CD4-positive, alpha-beta T cell (primary cell): ENCODE measurements at regions of chr7 and their contacts with region 1.

Region 1: DNA sequence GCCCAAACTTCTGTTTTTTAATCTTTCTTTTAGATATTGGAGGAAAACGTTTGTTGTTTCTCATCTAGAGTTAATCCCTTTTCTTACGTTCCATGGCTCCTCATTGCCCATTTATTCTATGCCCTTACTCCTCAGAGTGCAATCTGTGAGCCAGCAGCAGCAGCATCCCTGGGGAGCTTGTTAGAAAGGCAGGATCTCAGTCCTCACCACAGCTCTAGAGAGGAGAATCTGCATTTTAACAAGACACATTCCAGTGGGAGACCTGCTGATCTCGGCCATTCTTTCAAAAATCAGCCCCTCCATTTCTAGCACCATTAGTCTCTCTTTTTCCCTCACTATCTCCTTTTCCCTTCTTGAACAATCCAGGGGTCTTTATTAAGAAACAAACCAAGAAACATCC is 84.4 kb upstream of the NOBOX start:
- DNase-seq: no peak
- ATAC-seq: no peak
- H3K4me3 ChIP-seq: no peak overlapping the region
- H3K4me3 Mint-ChIP-seq: no peak overlapping the region
- H3K27ac ChIP-seq: no peak overlapping the region
- H3K27ac Mint-ChIP-seq: no peak overlapping the region
- H3K4me1 ChIP-seq: no peaks in the 10 kb centered on the region
- H3K4me1 Mint-ChIP-seq: no peaks in the 10 kb centered on the region
- H3K27me3 ChIP-seq: no peaks in the 10 kb centered on the region
- H3K27me3 Mint-ChIP-seq: no peaks in the 10 kb centered on the region
- CTCF ChIP-seq: no peak

Region 2: GRCh38 chr7:144439717-144440205 is 48.1 kb before region 1 on chr7:
- CTCF ChIA-PET with region 1: no interaction called
- POLR2A ChIA-PET with region 1: no interaction called
- intact Hi-C with region 1: no loop called
- DNase-seq: no peak
- ATAC-seq: no peak
- H3K4me3 ChIP-seq: no peak overlapping the region
- H3K4me3 Mint-ChIP-seq: no peak overlapping the region
- H3K27ac ChIP-seq: no peak overlapping the region
- H3K27ac Mint-ChIP-seq: no peak overlapping the region
- H3K4me1 ChIP-seq: no peaks in the 10 kb centered on the region
- H3K4me1 Mint-ChIP-seq: no peaks in the 10 kb centered on the region
- H3K27me3 ChIP-seq: no peaks in the 10 kb centered on the region
- H3K27me3 Mint-ChIP-seq: no peaks in the 10 kb centered on the region
- CTCF ChIP-seq: no peak

Region 3: DNA sequence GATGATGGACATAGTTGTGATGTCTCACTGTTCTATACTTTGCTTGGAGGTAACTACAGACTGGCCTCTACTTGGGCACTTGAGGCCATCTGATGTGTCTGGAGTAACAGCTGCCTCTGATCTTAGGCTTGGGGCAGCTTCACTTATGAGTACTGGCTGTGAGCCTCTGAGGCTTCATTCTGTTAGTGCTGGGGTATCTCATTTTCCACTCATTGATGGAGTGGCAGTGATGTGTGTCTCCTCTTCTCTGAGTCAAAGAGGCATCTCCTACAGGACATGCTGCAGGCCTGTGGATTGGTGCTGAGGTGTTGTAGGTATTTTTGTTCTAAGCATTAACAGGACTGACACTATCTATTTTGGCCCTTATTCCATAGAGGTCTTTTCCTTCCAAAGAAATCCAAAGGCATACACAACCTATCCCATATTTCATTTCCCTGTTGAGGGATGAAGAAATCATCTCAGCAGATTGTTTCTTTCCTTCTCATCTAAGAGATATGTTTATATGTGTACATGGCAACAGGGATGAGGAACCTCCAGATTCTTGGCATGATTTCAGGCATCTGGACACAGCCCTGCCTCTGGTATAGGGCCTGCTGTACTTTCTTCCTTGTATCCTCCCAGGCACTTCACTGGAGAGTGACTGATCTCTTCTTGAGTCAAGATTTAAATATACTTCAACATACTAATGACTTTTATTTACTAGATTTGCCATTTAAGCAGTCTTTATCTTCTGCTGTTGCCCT is 18.7 kb before region 1 on chr7:
- CTCF ChIA-PET with region 1: no interaction called
- POLR2A ChIA-PET with region 1: no interaction called
- intact Hi-C with region 1: no loop called
- DNase-seq: no peak
- ATAC-seq: no peak
- H3K4me3 ChIP-seq: no peak overlapping the region
- H3K4me3 Mint-ChIP-seq: no peak overlapping the region
- H3K27ac ChIP-seq: no peak overlapping the region
- H3K27ac Mint-ChIP-seq: no peak overlapping the region
- H3K4me1 ChIP-seq: no peaks in the 10 kb centered on the region
- H3K4me1 Mint-ChIP-seq: no peaks in the 10 kb centered on the region
- H3K27me3 ChIP-seq: no peaks in the 10 kb centered on the region
- H3K27me3 Mint-ChIP-seq: no peaks in the 10 kb centered on the region
- CTCF ChIP-seq: no peak

Region 4: DNA sequence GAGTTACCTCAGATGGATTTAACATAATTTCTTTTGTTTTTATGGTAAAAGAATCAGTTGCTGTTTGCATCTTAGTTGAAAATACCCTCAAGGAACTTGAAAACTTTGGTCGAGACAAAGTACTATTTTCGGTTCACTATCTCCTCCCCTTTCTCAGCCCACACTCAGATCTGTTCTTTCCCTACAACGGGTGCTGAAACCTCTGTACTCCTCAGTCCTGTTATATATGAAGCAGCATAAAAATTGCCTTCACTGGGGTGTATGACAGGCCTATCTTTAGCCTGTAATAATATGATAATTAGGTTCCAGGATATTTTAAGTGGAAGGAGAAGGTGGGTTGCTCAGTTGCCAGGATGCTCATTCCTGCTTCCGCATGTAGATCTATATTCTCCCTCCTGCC is 20.8 kb after region 1 on chr7:
- CTCF ChIA-PET with region 1: no interaction called
- POLR2A ChIA-PET with region 1: no interaction called
- intact Hi-C with region 1: loop called in 1 of 2 experiments (anchors 1 kb)
- DNase-seq: no peak
- ATAC-seq: no peak
- H3K4me3 ChIP-seq: no peak overlapping the region
- H3K4me3 Mint-ChIP-seq: no peak overlapping the region
- H3K27ac ChIP-seq: no peak overlapping the region
- H3K27ac Mint-ChIP-seq: no peak overlapping the region
- H3K4me1 ChIP-seq: no peaks in the 10 kb centered on the region
- H3K4me1 Mint-ChIP-seq: no peaks in the 10 kb centered on the region
- H3K27me3 ChIP-seq: no peaks in the 10 kb centered on the region
- H3K27me3 Mint-ChIP-seq: no peaks in the 10 kb centered on the region
- CTCF ChIP-seq: no peak

Region 5: DNA sequence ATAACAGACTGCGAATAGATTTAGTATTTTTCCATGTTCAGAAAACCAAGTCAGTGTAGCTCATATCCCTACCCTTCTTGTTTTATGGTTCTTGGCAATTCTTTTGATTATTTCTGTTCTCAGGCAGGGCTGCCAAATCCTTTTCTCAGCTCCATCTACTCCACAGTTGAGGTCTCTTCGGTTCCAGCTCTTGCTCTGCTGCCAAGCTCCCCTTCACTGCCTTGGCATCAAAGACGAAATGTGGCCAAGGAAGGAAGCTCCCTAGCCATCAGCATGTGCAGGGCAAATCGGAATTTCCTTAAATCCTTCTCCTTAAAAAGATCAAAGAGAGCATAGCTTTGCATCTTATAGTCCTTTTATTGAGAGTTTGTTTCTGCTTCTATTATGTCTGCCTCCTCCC is 32.0 kb after region 1 on chr7:
- CTCF ChIA-PET with region 1: no interaction called
- POLR2A ChIA-PET with region 1: no interaction called
- intact Hi-C with region 1: no loop called
- DNase-seq: no peak
- ATAC-seq: no peak
- H3K4me3 ChIP-seq: no peak overlapping the region
- H3K4me3 Mint-ChIP-seq: no peak overlapping the region
- H3K27ac ChIP-seq: no peak overlapping the region
- H3K27ac Mint-ChIP-seq: no peak overlapping the region
- H3K4me1 ChIP-seq: no peaks in the 10 kb centered on the region
- H3K4me1 Mint-ChIP-seq: peaks cover 27% of the 10 kb centered on the region
- H3K27me3 ChIP-seq: no peaks in the 10 kb centered on the region
- H3K27me3 Mint-ChIP-seq: no peaks in the 10 kb centered on the region
- CTCF ChIP-seq: no peak